Activated CD8-positive, alpha-beta memory T cell treated with anti-CD3 and anti-CD28 coated beads, Interleukin-2, amount 10 ng/mL, durations not matched to agents 7 days and 5 days (primary cell): ENCODE measurements at regions of chr1 and their contacts with region 1.

Region 1: GRCh38 chr1:1441002-1441888 is 5.8 kb downstream of the VWA1 start:
- DNase-seq: peak; percentile 59
- ATAC-seq: peak; percentile 83
- H3K4me3 Mint-ChIP-seq: no peak overlapping the region
- H3K27ac Mint-ChIP-seq: no peak overlapping the region
- H3K4me1 Mint-ChIP-seq: peaks cover 1% of the 10 kb centered on the region
- H3K27me3 Mint-ChIP-seq: peaks cover 5% of the 10 kb centered on the region

Region 2: GRCh38 chr1:1137256-1138045 is 303.8 kb before region 1 on chr1:
- CTCF ChIA-PET with region 1: no interaction called
- DNase-seq: peak; percentile 82
- ATAC-seq: peak; percentile 78
- H3K4me3 Mint-ChIP-seq: peak overlapping the region; percentile 59
- H3K27ac Mint-ChIP-seq: peak overlapping the region; percentile 82
- H3K4me1 Mint-ChIP-seq: peaks cover 20% of the 10 kb centered on the region
- H3K27me3 Mint-ChIP-seq: no peaks in the 10 kb centered on the region

Region 3: GRCh38 chr1:1324521-1325287 is 116.5 kb before region 1 on chr1 and contains the starts of genes CPTP and INTS11:
- CTCF ChIA-PET with region 1: no interaction called
- DNase-seq: peak; percentile 97
- ATAC-seq: peak; percentile 87
- H3K4me3 Mint-ChIP-seq: peak within 1 kb of the TSS; percentile 81
- H3K27ac Mint-ChIP-seq: peak within 1 kb of the TSS; percentile 86
- H3K4me1 Mint-ChIP-seq: peaks cover 26% of the 10 kb centered on the region
- H3K27me3 Mint-ChIP-seq: no peaks in the 10 kb centered on the region
- total RNA-seq, gene CPTP: 17.6 to 18.5 TPM
- total RNA-seq, gene INTS11: 126 to 135 TPM

Region 4: GRCh38 chr1:1406817-1407635 is 34.2 kb before region 1 on chr1 and contains the start of gene MRPL20:
- CTCF ChIA-PET with region 1: interaction called, 13 read pairs
- DNase-seq: peak; percentile 98
- ATAC-seq: peak; percentile 97
- H3K4me3 Mint-ChIP-seq: peak within 1 kb of the TSS; percentile 90
- H3K27ac Mint-ChIP-seq: peak within 1 kb of the TSS; percentile 91
- H3K4me1 Mint-ChIP-seq: peaks cover 34% of the 10 kb centered on the region
- H3K27me3 Mint-ChIP-seq: no peaks in the 10 kb centered on the region
- total RNA-seq, gene MRPL20: 95.2 to 130 TPM

Region 5: DNA sequence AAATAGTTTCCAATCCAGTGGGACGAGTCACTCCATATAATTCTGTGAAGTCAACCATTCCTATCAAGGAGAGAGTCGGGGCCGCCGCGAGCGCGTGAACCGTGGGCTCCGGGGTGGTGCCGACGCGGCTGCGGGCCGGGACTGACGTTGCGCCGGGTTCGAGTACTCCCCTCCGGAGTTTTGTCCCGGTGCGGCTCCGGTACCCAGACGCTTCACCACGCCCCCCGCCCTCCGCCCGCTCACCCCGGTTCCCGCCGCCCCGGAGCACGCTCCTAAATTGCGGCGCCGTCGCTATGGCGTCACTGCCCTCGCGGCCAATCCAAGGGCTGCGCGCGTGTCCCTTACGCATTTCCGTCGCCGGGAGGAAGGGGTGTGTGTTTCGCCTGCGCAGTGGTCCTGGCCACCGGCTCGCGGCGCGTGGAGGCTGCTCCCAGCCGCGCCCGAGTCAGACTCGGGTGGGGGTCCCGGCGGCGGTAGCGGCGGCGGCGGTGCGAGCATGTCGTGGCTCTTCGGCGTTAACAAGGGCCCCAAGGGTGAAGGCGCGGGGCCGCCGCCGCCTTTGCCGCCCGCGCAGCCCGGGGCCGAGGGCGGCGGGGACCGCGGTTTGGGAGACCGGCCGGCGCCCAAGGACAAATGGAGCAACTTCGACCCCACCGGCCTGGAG is 30.3 kb after region 1 on chr1 and contains the start of gene ATAD3B:
- CTCF ChIA-PET with region 1: no interaction called
- DNase-seq: peak; percentile 95
- ATAC-seq: peak; percentile 96
- H3K4me3 Mint-ChIP-seq: peak within 1 kb of the TSS; percentile 94
- H3K27ac Mint-ChIP-seq: peak within 1 kb of the TSS; percentile 89
- H3K4me1 Mint-ChIP-seq: peaks cover 30% of the 10 kb centered on the region
- H3K27me3 Mint-ChIP-seq: no peaks in the 10 kb centered on the region
- total RNA-seq, gene ATAD3B: 46.5 to 63.3 TPM

Region 6: DNA sequence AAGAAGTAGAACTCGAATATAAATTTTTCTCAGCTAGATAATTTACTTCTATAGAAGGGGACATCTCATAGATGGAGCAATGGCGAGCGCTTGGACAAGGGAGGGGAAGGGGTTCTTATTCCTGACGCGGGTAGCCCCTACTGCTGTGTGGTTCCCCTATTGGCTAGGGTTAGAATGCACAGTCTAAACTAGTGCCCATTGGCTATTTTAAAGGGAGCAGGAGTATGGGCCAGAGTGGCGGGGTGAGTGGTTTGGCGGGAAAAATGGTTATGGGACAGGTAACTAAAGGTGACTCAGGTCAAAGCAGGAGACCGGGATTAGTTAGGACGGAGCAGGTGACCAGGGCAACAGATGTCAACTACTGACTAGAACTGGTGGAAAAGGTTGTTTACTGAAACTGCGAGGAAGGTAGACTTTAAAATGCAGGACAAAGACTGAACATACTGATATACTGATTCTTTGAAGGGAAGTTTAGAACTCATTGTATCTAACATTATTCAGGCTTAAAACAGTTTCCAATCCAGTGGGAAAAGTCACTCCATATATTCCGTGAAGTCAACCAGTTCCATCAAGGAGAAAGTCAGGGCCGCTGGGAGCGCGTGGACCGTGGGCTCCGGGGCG is 69.8 kb after region 1 on chr1:
- CTCF ChIA-PET with region 1: interaction called, 11 read pairs
- DNase-seq: no peak
- ATAC-seq: no peak
- H3K4me3 Mint-ChIP-seq: peak overlapping the region; percentile 82
- H3K27ac Mint-ChIP-seq: peak overlapping the region; percentile 85
- H3K4me1 Mint-ChIP-seq: peaks cover 26% of the 10 kb centered on the region
- H3K27me3 Mint-ChIP-seq: no peaks in the 10 kb centered on the region

Region 7: DNA sequence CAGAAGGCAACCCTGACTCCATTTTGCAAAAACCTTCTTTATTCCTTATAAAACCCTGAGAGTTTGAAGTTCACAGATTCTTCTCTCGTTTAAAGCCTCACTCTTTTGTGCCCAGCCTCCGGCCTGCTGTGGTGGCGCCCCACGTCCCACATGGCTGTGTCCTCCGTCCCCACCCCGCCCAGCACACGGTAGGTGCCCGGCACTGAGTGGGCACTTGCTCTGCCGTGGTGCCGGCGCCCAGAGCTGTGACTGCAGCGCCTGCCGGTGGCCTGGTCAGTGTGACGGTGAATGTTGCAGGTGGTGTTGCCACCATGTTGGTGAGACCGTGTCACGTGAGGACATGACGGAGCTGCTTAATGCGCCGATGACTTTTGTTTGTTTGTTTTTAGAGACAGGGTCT is 80.1 kb after region 1 on chr1:
- CTCF ChIA-PET with region 1: no interaction called
- DNase-seq: no peak
- ATAC-seq: no peak
- H3K4me3 Mint-ChIP-seq: no peak overlapping the region
- H3K27ac Mint-ChIP-seq: no peak overlapping the region
- H3K4me1 Mint-ChIP-seq: no peaks in the 10 kb centered on the region
- H3K27me3 Mint-ChIP-seq: no peaks in the 10 kb centered on the region